ENCODE measurements at regions of chr3 and their contacts with region 1.

Region 1: DNA sequence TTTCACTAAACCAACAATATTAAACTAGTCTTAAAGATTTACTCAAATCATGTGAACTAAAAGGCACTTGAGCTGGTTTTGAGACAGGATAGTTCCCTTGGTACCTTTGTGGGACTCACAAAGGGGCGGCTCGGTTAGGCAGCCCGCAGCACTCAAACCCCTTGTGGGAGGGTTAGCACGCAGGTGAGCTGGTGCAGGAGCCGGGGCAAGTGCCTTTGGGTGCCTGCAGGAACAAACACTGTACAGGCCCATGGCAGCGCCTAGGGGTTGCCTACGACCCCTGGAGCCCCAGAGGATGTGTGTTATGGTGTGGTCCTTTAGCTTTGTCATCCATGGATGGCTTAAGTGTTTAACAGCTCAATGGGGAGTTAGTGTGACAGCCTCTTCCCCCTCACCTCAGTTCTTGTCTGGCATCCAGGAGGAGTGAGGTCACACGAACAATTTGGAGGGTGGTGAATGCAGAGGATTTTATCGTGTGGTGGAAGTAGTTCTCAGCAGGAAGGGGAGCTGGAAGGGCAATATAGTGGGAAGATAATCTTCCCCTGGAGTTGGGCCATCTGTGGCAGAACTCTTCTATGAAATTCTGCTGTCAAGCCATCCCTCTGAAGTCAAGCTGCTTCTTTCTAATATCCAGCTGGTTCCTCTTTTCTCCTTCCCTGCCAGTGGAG is 470.9 kb downstream of the RBMS3 start:
- DNase-seq: peak in 4 of 5 donors; percentile 35 to 48 (median 40)
- ATAC-seq: peak; percentile 62 to 91 (median 88)
- H3K4me3 ChIP-seq: no peak overlapping the region
- H3K27ac ChIP-seq: peak overlapping the region in 7 of 12 donors; percentile 4 to 63 (median 35)
- H3K4me1 ChIP-seq: peaks cover 0 to 44% (median 11%) of the 10 kb centered on the region in 12 donors
- H3K27me3 ChIP-seq: no peaks in the 10 kb centered on the region
- CTCF ChIP-seq: no peak
- POLR2A ChIP-seq: no peak

Region 2: GRCh38 chr3:29212789-29213433 is 538.9 kb before region 1 on chr3:
- intact Hi-C with region 1: no loop called
- DNase-seq: no peak
- ATAC-seq: no peak
- H3K4me3 ChIP-seq: no peak overlapping the region
- H3K27ac ChIP-seq: no peak overlapping the region
- H3K4me1 ChIP-seq: no peaks in the 10 kb centered on the region
- H3K27me3 ChIP-seq: no peaks in the 10 kb centered on the region
- CTCF ChIP-seq: no peak
- POLR2A ChIP-seq: no peak

Region 3: DNA sequence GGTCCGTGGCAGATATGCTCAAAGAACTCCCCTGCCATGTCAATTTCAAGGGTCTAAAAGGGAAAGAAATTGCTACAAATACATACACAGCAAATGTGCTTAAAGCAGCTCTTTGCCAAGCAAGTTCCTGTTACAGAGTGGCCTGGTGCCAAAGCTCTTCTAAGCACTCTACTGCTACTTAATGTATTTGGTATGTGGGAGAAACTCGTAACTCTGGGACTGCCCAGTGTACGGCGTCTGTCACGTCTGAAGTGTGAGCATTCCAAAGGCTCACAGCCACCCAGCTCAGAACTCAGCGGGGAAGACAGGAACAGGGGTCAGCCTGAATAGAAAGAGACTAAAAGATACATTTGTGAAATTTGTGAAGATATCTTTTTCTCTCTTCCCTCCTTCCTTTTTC is 416.3 kb before region 1 on chr3:
- intact Hi-C with region 1: loop called in 2 of 10 experiments (anchors 5 kb)
- DNase-seq: peak; percentile 65 to 89 (median 86)
- ATAC-seq: peak; percentile 95 to 98 (median 96)
- H3K4me3 ChIP-seq: peak overlapping the region in 10 of 12 donors; percentile 6 to 48 (median 35)
- H3K27ac ChIP-seq: peak overlapping the region; percentile 29 to 91 (median 76)
- H3K4me1 ChIP-seq: peaks cover 14 to 96% (median 52%) of the 10 kb centered on the region in 12 donors
- H3K27me3 ChIP-seq: no peaks in the 10 kb centered on the region
- CTCF ChIP-seq: no peak
- POLR2A ChIP-seq: no peak

Region 4: GRCh38 chr3:29693863-29694262 is 57.9 kb before region 1 on chr3:
- intact Hi-C with region 1: loop called in 6 of 10 experiments (anchors 5 to 10 kb)
- DNase-seq: no peak
- ATAC-seq: peak; percentile 17 to 49 (median 30)
- H3K4me3 ChIP-seq: no peak overlapping the region
- H3K27ac ChIP-seq: peak overlapping the region in 11 of 12 donors; percentile 40 to 82 (median 64)
- H3K4me1 ChIP-seq: peaks cover 6 to 48% (median 35%) of the 10 kb centered on the region in 12 donors
- H3K27me3 ChIP-seq: no peaks in the 10 kb centered on the region
- CTCF ChIP-seq: no peak
- POLR2A ChIP-seq: no peak

Region 5: DNA sequence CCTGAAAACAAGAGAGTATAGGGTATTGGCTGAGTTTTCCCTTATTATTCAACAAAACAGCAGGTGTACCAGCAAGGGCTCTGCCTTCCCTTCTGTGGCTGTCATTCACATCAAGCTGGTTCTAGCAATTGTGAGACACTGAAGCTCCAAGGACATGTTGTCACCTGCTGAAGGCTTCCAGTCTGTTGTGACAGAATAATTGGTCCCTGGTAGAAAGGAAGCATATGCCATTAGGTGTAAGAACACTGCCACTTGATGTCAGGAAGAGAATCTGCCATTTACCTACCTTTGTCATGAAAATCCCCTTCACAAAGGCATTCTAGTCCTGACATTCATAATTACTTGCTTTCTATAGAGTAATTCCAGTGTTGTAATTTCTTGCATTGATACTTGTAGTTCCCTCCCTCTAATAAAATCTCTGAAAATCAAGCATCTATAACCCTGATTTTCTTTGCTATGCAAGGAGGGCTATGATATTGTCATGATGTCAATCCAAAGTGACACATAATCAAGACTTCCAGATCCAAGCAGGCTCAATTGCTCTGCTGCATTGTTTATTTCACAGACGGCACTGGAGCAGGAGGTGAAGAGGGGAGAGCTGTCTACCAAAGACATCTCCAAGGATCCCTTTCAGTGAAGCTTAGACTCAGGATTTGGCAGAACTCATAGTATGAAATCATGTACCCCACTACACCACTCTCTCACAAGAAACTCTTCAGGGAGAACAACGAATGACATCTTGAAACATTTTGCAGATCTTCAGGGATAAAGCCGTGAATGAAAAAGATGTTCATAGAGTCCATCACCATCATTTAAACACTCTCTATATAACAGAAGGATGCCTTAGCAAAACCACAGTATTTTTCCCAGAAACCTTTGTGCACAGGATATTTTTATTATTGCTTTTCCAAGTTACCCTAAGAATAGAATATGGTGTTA is 45.6 kb before region 1 on chr3:
- intact Hi-C with region 1: loop called in 2 of 10 experiments (anchors 5 kb)
- DNase-seq: no peak
- ATAC-seq: no peak
- H3K4me3 ChIP-seq: no peak overlapping the region
- H3K27ac ChIP-seq: peak overlapping the region in 1 of 12 donors; percentile 21
- H3K4me1 ChIP-seq: peaks cover 0 to 52% (median 16%) of the 10 kb centered on the region in 12 donors
- H3K27me3 ChIP-seq: no peaks in the 10 kb centered on the region
- CTCF ChIP-seq: no peak
- POLR2A ChIP-seq: no peak